ENCODE measurements at regions of chr7 and their contacts with region 1.

Region 1: GRCh38 chr7:76314042-76314721 is 11.7 kb downstream of the HSPB1 start:
- DNase-seq: peak; percentile 99
- ATAC-seq: peak; percentile 71

Region 2: GRCh38 chr7:76179686-76180085 is 134.5 kb before region 1 on chr7:
- intact Hi-C with region 1: loop called (anchors 10 kb)
- DNase-seq: no peak
- ATAC-seq: no peak

Region 3: DNA sequence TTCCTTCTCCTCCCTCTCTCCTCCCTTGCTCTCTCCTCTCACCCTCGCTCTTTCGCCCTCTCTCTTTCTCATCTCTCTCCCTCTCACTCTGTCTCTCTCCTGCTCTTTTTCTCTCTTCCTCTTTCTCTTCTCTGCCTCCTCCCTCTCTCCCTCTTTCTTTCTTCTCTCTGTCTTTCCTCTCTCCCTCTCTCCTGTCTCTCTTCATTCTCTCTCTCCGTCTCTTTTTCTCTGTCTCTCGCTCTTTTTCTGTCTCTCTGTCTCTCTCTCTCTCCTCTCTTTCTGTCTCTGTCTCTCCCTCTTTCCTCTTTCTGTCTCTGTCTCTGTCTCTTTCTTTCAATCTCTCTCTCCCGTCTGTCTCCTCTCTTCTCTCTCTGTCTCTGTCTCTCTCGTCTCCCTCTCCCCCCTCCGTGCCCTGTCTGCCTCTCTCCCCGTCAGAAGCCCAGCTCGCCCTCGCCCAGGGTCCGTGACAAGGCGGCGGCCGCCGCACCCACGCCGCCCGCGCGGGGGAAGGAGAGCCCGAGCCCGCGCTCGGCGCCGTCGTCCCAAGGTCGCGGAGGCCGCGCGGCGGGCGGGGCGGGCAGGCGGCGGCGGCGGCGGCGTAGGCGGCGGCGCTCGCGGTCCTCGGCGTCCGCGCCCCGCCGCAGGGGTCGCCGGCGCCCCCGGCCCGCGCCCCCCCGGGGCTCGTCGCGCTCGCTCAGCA is 33.0 kb before region 1 on chr7:
- intact Hi-C with region 1: no loop called
- DNase-seq: no peak
- ATAC-seq: no peak

Region 4: DNA sequence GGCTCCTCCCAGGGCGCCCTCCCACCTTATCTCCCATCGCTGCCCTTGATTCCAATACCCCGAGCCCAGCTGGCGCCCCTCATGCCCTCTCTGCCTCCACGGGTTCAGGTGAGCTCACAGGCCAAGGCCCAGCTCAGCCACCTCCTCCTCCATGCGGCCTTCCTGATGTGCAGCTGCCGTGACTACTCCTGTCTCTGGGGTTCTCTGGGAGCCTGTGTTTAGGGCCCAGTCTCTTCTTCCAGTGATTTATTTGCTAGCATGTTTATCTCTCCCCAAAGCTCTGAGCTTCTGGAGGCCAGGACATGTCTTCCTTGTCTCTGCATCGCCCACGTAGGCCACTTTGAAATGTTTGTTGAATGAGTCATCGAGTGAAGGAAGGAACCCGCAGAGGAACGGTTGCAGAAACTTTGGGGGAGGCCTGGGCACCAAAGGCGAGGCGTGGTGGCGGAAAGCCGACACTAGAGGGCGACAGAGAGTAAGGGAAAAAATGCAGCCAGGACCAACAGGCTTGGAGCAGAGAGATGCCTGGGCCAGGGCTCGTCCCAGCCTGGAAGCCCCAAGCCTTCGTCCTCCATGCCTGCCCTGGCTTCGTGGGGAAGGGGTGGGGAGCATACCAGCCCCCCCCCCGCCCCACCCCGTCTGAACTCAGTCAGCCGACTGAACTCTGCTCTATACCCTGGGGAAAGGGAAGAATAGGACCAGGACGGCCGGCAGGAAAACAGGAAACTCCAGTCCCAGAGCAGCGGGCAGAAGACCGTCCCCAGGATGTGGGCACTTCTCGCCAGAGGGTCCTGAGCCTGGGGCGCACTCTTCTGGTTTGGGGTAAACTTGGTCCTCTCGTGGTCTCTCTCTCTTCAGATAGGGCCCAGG is 22.6 kb before region 1 on chr7:
- intact Hi-C with region 1: loop called (anchors 2 kb)
- DNase-seq: peak; percentile 95
- ATAC-seq: peak; percentile 84